Calu3 (cell line): ENCODE measurements at regions of chr6 and their contacts with region 1.

Region 1: GRCh38 chr6:160534050-160534696 is 129.9 kb downstream of the LPA start:
- DNase-seq: peak; percentile 64
- H3K4me3 Mint-ChIP-seq: no peak overlapping the region
- H3K27ac Mint-ChIP-seq: no peak overlapping the region
- H3K4me1 Mint-ChIP-seq: no peaks in the 10 kb centered on the region
- H3K27me3 Mint-ChIP-seq: no peaks in the 10 kb centered on the region
- CTCF ChIP-seq: peak; percentile 94

Region 2: DNA sequence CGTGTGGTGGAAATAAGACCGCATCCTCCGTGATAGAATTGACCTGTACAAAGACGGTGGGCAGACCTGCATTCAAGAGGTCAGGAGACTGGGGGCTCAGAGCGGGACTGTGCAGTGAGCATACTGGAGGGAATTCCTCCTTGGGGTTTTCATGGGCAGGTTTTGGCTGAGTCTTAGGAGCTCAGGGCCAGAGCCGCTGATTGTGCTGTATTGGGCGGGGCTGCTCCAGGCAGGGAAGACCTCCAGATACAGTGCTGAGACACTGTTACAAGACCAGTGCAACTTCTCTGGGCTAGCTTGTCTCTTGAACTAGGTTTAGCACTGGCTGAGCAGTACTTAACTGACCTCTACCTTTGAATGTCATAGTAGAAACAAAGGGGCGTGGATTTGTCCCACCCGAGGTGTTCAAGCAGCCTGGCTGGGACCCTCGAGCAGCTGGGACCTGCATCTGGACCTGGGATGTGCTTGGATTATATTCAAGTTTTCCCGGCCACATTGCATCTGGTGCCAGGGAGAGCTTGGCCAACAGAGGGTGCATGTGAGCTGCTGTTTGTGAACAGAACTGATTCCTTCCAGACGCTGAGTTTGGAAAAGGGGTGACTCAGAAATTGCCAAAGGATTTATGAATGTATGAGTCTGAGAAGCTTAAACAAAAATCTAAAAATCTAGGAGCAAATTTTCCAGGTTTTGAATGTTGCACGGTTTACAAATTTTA is 445.9 kb before region 1 on chr6:
- CTCF ChIA-PET with region 1: interaction called, 5 read pairs
- intact Hi-C with region 1: loop called (anchors 2 kb)
- DNase-seq: peak; percentile 56
- H3K4me3 Mint-ChIP-seq: no peak overlapping the region
- H3K27ac Mint-ChIP-seq: no peak overlapping the region
- H3K4me1 Mint-ChIP-seq: no peaks in the 10 kb centered on the region
- H3K27me3 Mint-ChIP-seq: no peaks in the 10 kb centered on the region
- CTCF ChIP-seq: peak; percentile 73

Region 3: DNA sequence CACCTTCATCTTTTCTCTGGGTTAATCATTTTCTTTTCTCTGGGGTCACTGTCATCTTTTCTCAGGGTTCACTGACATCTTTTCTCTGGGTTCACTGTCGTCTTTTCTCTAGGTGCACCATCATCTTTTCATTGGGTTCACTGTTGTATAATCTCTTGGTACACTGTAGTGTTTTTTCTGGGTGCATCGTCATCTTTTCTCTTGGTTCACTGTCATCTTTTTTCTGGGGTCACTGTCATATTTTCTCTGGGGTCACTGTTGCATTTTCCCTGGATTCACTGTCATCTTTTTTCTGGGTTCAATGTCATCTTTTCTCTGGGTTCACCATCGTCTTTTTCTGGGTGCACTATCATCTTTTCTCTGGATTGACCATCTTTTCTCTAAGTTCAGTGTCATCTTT is 311.6 kb after region 1 on chr6:
- CTCF ChIA-PET with region 1: no interaction called
- intact Hi-C with region 1: no loop called
- DNase-seq: no peak
- H3K4me3 Mint-ChIP-seq: no peak overlapping the region
- H3K27ac Mint-ChIP-seq: no peak overlapping the region
- H3K4me1 Mint-ChIP-seq: no peaks in the 10 kb centered on the region
- H3K27me3 Mint-ChIP-seq: no peaks in the 10 kb centered on the region
- CTCF ChIP-seq: no peak